ENCODE measurements at regions of chr18 and their contacts with region 1.

Region 1: DNA sequence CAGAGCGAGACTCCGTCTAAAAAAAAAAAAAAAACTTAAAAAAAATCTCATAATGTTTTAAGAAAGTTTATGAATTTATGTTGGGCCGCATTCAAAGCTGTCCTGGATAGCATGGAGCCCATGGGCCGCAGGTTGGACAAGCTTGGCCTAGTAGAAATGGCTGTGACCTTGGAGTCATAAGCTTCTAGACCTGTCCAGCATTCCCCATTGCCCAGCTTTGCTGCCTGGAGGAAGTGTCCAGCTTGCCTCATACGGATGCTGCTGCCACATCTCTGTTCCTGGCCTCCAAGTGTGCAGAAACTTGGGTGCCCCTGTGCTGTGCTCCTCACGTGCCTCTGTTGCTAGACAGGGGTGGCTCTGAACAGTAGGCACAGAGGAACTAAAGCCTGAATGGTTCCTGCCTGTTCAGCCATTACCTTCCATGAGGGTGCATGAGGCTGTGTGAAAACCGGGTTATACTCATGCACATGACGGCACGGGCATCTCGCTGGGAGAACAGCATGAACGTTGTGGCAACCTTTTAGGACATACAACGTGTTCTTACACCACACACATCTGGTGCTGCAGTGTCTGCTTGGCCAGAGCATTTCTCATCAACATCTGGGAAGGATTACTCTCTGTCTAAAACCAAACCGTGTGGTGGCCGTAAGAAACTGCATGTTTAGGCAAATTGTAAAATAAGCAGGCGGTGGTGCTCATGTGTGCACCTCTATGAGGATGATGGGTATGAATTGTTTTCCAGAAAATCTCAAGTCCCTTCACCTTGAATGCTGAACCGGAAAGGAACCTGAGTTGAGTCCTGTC is 38.2 kb downstream of the FHOD3 start:
- DNase-seq: no peak
- ATAC-seq: no peak
- H3K4me3 ChIP-seq: no peak overlapping the region
- H3K27ac ChIP-seq: no peak overlapping the region
- H3K4me1 ChIP-seq: peaks cover 4% of the 10 kb centered on the region
- H3K27me3 ChIP-seq: no peaks in the 10 kb centered on the region

Region 2: DNA sequence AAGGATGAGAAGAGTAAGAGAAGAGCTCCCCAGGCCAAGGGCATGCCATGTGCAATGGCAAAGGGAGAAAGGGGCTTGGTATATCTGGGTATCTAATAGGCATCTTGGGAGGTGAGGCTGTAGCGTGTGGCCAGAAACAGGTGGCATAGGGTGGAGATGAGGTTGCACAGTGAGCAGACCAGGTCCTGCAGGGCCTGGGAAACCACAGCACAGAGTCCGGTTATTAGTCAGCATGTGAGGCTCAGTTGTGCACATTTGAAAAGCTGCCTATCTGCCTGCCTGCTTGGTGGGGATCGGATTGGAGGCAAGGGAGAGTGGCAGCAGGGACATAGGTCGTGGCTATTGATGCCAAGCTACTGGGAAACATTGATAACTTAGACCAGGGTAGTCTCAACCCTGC is 302.5 kb after region 1 on chr18:
- intact Hi-C with region 1: loop called in 1 of 4 experiments (anchors 5 kb)
- DNase-seq: no peak
- ATAC-seq: no peak
- H3K4me3 ChIP-seq: no peak overlapping the region
- H3K27ac ChIP-seq: no peak overlapping the region
- H3K4me1 ChIP-seq: peaks cover 16% of the 10 kb centered on the region
- H3K27me3 ChIP-seq: no peaks in the 10 kb centered on the region